Esophagus muscularis mucosa (tissue), 4 donors: ENCODE measurements at regions of chr15 and their contacts with region 1.

Region 1: DNA sequence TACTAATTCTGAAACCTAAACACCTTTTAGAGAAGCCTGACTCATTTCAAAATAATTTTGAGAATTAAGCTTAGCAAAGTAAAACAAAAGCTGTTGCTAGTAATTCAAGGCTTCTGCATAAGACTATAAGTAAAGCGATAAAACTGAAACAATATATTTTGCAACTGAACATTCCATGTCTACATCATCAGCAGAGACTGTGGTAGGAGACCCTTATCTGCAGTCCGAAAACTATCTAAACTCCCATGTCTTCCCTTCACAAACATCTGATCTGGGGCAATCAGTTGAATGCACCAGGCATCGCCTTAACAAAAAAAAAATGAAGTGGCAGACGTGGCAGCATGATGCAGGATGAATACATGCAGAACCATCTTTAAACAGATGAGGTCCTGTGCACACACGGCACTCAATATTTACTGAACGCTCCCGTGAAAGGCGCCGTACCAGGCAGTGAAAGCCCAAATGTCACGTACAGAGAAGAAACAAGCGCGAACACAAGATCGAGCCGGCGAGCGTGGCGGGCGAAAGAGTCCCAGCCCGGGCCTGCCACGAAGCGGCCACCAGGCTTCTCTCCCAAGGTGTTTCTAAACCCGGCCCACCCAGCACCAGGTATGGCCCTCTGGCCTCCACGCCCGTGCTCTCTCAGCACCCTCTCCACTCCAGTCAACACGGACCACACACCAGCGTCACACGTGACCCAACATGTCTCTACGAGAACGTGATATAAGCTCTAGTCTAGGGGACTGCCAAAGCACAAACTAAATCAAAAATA is 63.0 kb downstream of the CHSY1 start:
- DNase-seq: no peak
- H3K4me3 ChIP-seq: peak overlapping the region; percentile 34 to 53 (median 44)
- H3K27ac ChIP-seq: peak overlapping the region; percentile 68 to 76 (median 70)
- H3K4me1 ChIP-seq: peaks cover 60 to 89% (median 83%) of the 10 kb centered on the region in 4 donors
- H3K27me3 ChIP-seq: no peaks in the 10 kb centered on the region
- CTCF ChIP-seq: no peak
- EP300 ChIP-seq: no peak
- POLR2A ChIP-seq: no peak

Region 2: DNA sequence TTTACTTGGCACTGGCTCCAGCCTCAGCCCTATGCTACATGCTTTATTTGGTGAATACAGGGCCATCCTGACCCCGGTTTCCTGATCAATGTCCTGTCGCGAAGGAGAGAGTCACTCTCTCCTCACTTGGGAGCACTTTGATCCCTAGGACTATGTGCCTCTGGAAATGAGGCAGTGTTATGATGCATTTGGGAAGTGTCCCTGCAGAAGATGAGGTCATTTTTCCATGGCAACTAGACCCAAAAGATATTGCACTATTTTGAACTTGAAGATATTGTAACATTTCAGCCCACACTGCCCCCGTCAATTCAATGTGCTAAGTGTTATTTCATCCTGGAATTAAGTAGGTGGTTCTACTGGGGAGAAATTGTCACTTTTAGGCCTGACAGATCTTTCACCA is 201.7 kb before region 1 on chr15:
- intact Hi-C with region 1: no loop called
- DNase-seq: no peak
- H3K4me3 ChIP-seq: no peak overlapping the region
- H3K27ac ChIP-seq: peak overlapping the region in 2 of 4 donors; percentile 19 to 44
- H3K4me1 ChIP-seq: no peaks in the 10 kb centered on the region
- H3K27me3 ChIP-seq: no peaks in the 10 kb centered on the region
- CTCF ChIP-seq: no peak
- EP300 ChIP-seq: no peak
- POLR2A ChIP-seq: no peak

Region 3: DNA sequence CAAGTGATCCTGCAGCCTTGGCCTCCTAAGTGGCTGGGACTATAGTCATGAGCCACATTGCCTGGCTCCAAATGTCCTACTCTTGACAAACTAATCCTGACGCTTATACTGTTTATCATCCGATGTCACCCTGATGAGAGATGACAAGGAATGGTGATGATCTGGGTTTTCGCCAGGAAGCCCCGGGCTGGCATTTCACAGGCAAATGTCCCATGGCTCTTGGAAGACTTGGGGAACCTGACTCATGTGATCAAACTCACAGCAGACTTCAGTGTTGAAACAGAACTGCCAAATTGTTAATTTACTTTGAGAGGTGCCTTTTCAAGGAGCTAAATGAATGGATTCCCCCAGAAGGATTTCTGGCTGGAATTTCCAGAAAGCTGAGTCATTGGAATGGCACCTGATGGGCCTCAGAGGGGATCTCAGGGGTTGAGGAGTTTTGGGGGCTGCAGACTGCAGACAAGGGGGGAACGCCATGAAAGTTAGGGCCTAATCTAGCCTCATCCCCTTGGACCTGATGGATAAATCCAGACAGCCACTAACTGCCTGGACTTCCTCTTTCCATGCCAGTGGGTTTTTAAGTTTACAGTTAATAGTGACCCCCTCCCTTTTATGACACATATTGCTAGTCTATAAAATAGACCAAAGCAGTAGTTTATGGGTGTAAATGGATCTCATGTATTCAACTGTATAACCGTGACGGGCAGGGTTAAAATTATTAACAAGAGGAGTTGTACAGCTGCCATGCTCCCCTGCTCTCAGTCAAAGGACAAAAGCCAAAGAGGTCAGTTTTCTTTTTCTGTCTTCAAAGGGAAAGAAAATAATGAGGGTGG is 83.5 kb before region 1 on chr15:
- intact Hi-C with region 1: no loop called
- DNase-seq: no peak
- H3K4me3 ChIP-seq: no peak overlapping the region
- H3K27ac ChIP-seq: no peak overlapping the region
- H3K4me1 ChIP-seq: peaks cover 0 to 6% (median 0%) of the 10 kb centered on the region in 4 donors
- H3K27me3 ChIP-seq: no peaks in the 10 kb centered on the region
- CTCF ChIP-seq: no peak
- EP300 ChIP-seq: no peak
- POLR2A ChIP-seq: no peak

Region 4: DNA sequence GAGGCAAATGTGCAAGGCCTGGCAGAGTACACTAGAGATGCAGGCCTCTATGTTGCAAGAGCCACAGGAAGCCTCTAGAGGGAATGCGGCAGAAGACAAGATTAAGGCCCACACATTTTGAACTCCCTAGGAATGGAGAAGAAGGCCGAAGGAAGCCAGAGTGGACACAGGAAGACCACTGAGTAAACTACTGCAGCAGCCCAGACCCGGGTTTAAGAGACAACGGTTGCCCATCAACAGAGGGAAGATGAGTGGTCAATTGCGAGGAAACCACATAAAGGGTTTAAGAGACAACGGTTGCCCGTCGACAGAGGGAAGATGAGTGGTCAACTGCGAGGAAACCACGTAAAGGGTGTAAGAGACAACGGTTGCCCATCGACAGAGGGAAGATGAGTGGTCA is 48.4 kb after region 1 on chr15:
- intact Hi-C with region 1: loop called (anchors 2 kb)
- DNase-seq: no peak
- H3K4me3 ChIP-seq: no peak overlapping the region
- H3K27ac ChIP-seq: no peak overlapping the region
- H3K4me1 ChIP-seq: peaks cover 11 to 67% (median 63%) of the 10 kb centered on the region in 4 donors
- H3K27me3 ChIP-seq: no peaks in the 10 kb centered on the region
- CTCF ChIP-seq: no peak
- EP300 ChIP-seq: no peak
- POLR2A ChIP-seq: no peak